Heart left ventricle (tissue), 16 donors: ENCODE measurements at regions of chr3 and their contacts with region 1.

Region 1: DNA sequence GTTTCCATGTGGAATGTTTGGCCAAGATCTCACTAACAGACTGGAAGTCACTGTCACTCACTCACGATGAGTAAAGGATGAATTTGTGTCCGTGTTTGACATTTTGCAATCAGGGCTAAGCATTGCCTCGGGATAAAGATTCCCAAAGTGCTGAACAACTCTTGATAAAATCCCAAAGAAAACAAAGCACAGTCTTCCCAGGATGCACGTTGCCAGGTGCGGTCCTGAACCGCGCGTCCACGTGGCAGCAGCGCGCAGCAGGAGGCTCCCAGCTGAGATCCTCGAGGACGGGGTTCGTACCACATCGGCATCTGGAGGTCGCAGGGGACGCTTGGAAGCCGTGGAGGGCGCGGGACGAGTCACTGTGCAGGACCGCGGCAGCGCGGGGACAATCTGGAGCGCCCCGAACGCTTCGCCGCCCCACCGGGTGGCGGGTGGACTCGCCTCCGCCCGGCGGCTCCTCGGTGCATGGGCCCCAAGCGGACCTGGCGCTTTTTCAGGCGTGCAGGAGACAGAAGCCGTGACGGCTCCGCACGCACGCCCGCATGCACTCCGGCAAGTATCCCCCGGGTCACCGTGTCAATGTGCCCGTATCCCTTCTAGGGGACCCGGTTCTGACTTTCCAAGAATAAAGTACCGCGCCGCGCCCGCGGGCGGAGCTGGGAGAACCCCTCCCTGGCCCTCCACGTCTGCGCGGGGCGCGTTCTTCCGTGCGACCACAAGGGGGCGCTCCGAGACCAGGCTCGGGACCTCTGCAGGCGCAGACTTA is 17.7 kb downstream of the CPN2 start:
- DNase-seq: peak; percentile 82 to 94 (median 86)
- ATAC-seq: peak; percentile 87 to 92 (median 90)
- H3K4me3 ChIP-seq: peak overlapping the region in 11 of 12 donors; percentile 3 to 56 (median 46)
- H3K27ac ChIP-seq: no peak overlapping the region
- H3K4me1 ChIP-seq: peaks cover 0 to 28% (median 11%) of the 10 kb centered on the region in 12 donors
- H3K27me3 ChIP-seq: peaks cover 0 to 35% (median 13%) of the 10 kb centered on the region in 9 donors
- CTCF ChIP-seq: peak; percentile 98 to 100 (median 99)
- POLR2A ChIP-seq: no peak

Region 2: DNA sequence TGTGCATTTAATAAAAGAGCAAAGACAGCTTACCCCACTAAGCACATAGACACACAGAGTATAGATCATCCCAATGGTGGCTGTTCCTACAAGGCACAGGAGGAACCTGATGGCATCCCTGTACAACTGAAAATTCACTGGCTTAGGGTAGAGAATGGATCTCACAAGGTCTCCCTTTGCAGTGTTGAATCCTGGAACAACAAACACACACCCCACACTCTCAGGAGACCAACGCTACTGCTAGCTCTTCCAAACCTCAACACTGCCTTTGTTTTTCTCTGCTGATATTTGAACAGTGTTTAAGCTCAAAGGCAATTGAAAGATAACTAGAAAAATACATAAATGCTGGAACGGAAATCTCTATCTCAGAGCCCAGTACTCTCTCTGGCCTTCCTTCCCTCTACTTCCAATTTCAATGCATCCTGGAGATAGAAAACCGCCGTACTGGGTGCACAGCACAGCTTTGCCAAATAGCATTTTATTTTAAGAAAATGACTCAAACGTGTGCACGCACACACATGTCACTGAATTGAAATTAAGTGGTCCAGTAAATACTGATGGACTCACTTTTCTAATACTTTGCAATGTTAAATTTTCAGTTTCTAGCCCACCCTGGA is 867.3 kb before region 1 on chr3:
- intact Hi-C with region 1: no loop called
- DNase-seq: no peak
- ATAC-seq: no peak
- H3K4me3 ChIP-seq: no peak overlapping the region
- H3K27ac ChIP-seq: no peak overlapping the region
- H3K4me1 ChIP-seq: peaks cover 0 to 6% (median 0%) of the 10 kb centered on the region in 12 donors
- H3K27me3 ChIP-seq: no peaks in the 10 kb centered on the region
- CTCF ChIP-seq: no peak
- POLR2A ChIP-seq: no peak

Region 3: DNA sequence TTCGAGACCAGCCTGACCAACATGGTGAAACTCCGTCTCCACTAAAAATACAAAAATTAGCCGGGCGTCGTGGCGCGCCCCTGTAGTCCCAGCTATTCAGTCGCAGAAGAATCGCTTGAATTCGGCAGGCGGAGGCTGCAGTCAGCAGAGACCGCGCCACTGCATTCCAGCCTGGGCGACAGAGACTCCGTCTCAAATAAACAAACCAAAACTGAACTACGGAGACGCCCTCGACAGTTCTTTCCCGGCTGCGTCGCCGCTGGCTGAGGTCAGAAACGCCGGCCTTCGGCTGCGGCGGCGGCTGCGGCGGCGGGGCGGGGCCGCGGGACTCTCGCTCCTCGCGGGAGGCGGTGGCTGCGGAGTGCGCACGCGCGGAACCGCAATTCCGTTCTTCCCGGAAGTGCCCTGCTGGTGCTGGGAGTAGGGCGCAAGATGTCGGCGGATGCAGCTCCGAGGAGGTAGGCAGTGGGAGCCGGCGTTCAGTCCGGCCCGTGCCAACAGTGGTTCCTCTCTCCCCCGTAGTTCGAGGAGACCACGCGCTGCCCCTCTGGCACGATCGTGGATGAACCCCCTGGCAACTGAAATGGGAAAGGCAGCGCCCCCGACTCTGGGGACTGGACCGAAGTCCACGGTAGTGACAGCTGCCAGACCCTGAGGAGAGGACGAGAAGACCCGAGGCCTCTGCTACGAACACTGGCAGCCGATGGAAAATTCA is 250.4 kb after region 1 on chr3:
- intact Hi-C with region 1: loop called in 1 of 10 experiments (anchors 10 kb)
- DNase-seq: peak; percentile 93 to 98 (median 95)
- ATAC-seq: peak; percentile 52 to 89 (median 84)
- H3K4me3 ChIP-seq: peak overlapping the region; percentile 48 to 95 (median 74)
- H3K27ac ChIP-seq: peak overlapping the region; percentile 84 to 100 (median 94)
- H3K4me1 ChIP-seq: peaks cover 0 to 62% (median 27%) of the 10 kb centered on the region in 12 donors
- H3K27me3 ChIP-seq: no peaks in the 10 kb centered on the region
- CTCF ChIP-seq: peak in 1 of 12 donors; percentile 8
- POLR2A ChIP-seq: peak in 1 of 2 donors; percentile 90

Region 4: DNA sequence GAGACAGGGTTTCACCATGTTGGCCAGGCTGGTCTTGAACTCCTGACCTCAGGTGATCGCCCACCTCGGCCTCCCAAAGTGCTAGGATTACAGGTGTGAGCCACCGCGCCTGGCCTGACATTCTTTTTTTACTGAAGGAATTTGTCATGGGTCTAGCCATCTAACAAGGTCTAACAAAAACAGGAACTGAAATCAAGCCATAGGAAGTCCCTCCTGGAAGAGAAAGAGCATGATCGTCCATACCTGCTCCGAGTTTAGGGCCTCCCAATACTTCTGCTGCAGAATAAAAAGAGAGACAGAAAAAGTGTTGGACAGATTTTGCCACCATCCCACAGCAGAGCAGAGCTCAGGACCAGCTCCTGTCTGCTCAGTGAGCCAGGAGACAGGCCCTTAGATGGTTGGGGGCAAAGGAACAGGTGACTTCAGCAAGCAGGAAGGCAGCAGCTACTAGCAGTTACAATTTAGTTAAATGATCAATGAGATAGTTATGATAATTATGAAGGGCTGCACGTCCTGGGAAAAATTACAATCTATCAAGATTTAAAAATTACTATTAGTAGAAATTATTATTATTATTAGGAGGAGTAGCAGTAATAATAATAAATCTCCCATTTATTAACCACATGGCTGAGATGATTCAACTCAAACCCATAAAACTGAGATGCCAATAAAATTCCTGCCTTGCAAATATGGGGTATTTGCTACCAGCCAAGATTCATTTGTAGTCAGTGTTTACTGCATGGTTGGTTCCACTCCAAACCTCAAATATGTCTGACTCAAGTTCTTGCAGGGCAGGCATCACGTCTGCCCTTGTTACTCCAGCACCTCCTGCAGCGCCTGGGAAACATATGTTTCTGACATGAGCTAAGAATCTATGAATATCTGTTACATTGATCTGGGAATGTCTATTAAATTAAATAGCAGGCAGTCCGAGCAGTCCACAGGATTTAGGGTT is 259.7 kb after region 1 on chr3:
- intact Hi-C with region 1: loop called in 6 of 10 experiments (anchors 10 kb)
- DNase-seq: no peak
- ATAC-seq: peak in 3 of 4 donors; percentile 38 to 60 (median 55)
- H3K4me3 ChIP-seq: no peak overlapping the region
- H3K27ac ChIP-seq: peak overlapping the region in 2 of 12 donors; percentile 20 to 23
- H3K4me1 ChIP-seq: peaks cover 0 to 26% (median 5%) of the 10 kb centered on the region in 12 donors
- H3K27me3 ChIP-seq: no peaks in the 10 kb centered on the region
- CTCF ChIP-seq: no peak
- POLR2A ChIP-seq: no peak